Dendritic cell treated with granulocyte-macrophage colony-stimulating factor and Interleukin-4, amounts not matched to agents 40 ng/mL and 50 ng/mL, for 4 days (primary cell): ENCODE measurements at regions of chr3 and their contacts with region 1.

Region 1: GRCh38 chr3:171301998-171302397 is 158.2 kb downstream of the TNIK start:
- H3K4me3 Mint-ChIP-seq: no peak overlapping the region
- H3K27ac Mint-ChIP-seq: no peak overlapping the region
- H3K4me1 Mint-ChIP-seq: no peaks in the 10 kb centered on the region
- H3K27me3 Mint-ChIP-seq: no peaks in the 10 kb centered on the region

Region 2: DNA sequence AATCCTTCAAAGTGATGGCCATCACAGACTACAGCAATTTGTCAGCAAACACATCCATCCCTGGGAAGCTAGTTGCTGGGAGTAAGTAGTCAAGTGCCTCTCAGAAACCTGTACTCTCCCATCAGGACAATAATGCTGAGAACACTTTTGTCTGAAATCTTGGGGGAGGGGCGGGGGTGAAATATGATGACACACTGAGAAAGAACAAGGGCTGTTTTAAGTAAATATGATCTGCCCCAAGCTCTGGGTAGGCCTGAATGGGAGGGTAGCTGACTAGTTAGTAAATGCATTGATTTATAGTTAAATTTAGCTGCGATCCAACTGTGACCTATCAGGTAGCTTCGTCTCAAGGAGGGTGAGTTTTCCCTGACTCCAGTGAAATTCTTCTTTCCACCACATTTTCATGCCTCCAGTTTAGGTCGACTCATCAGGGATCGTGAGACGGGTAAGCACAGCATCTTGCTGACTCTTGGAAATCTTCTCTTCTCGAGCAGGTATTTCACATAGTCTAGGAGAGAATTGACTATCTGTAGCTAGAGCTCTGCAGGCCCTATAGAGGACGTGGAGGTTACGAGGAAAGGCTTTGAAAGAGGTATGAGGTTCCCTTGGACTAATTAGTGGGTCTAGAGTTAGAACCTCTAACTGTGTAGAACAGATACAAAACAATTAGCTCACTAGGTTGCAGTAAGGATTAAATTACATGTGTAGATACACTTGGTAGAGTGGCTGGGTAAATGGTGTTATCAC is 62.1 kb before region 1 on chr3:
- intact Hi-C with region 1: loop called (anchors 2 kb)
- H3K4me3 Mint-ChIP-seq: no peak overlapping the region
- H3K27ac Mint-ChIP-seq: no peak overlapping the region
- H3K4me1 Mint-ChIP-seq: no peaks in the 10 kb centered on the region
- H3K27me3 Mint-ChIP-seq: no peaks in the 10 kb centered on the region